ENCODE measurements at regions of chr6 and their contacts with region 1.

Region 1: DNA sequence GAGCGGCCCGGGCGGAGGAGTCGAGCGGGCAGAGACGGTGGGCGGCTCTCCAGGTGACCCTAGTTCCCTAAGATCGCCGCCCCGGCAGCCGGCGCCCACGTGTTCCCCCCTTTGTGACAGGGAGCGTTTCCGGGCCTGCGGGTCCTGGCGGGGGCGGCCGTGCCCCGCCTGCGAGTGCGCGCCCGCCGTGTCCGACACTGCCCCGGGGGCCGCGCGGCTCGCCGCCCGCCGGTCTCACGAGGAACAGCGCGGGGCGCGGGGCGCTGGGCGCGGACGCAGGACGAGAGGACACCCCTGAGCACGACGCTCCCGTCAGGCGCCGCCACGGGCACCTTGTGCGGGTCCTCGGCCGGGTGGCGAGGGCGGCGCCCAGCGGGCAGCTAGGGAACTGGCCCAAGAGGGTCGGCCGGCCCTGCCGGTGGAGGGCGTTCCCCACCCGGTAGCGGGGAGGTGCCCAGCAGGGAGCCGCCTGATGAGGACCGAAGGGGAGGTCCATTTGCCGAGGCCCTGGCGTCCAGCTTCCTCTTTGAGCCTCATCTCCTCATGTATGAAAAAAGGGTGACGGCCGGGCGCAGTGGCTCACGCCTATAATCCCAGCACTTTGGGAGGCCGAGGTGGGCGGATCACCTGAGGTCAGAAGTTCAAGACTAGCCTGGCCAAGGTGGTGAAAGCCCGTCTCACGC is at the start of gene VARS1:
- DNase-seq: peak; percentile 72 to 94
- H3K4me3 ChIP-seq: peak within 1 kb of the TSS; percentile 81 to 83
- H3K27ac ChIP-seq: peak within 1 kb of the TSS; percentile 88 to 92
- H3K4me1 ChIP-seq: peaks cover 4 to 18% of the 10 kb centered on the region in 2 donors
- H3K27me3 ChIP-seq: no peaks in the 10 kb centered on the region
- CTCF ChIP-seq: peak; percentile 71 to 97 (median 89)
- total RNA-seq, gene VARS1: 48.3 TPM

Region 2: GRCh38 chr6:31580807-31581433 is 214.8 kb before region 1 on chr6:
- intact Hi-C with region 1: no loop called
- DNase-seq: peak in 1 of 2 donors; percentile 93
- H3K4me3 ChIP-seq: peak overlapping the region; percentile 69 to 86
- H3K27ac ChIP-seq: peak overlapping the region; percentile 58 to 75
- H3K4me1 ChIP-seq: peaks cover 0 to 12% of the 10 kb centered on the region in 2 donors
- H3K27me3 ChIP-seq: no peaks in the 10 kb centered on the region
- CTCF ChIP-seq: peak; percentile 96 to 99 (median 96)

Region 3: GRCh38 chr6:31815025-31815838 is 19.5 kb after region 1 on chr6 and contains the starts of genes HSPA1A and HSPA1L:
- intact Hi-C with region 1: loop called (anchors 2 kb)
- DNase-seq: peak; percentile 90 to 98
- H3K4me3 ChIP-seq: peak within 1 kb of the TSS; percentile 50 to 72
- H3K27ac ChIP-seq: peak within 1 kb of the TSS; percentile 96
- H3K4me1 ChIP-seq: peaks cover 7 to 24% of the 10 kb centered on the region in 2 donors
- H3K27me3 ChIP-seq: no peaks in the 10 kb centered on the region
- CTCF ChIP-seq: no peak
- total RNA-seq, gene HSPA1A: 288 TPM
- total RNA-seq, gene HSPA1L: not detected

Region 4: DNA sequence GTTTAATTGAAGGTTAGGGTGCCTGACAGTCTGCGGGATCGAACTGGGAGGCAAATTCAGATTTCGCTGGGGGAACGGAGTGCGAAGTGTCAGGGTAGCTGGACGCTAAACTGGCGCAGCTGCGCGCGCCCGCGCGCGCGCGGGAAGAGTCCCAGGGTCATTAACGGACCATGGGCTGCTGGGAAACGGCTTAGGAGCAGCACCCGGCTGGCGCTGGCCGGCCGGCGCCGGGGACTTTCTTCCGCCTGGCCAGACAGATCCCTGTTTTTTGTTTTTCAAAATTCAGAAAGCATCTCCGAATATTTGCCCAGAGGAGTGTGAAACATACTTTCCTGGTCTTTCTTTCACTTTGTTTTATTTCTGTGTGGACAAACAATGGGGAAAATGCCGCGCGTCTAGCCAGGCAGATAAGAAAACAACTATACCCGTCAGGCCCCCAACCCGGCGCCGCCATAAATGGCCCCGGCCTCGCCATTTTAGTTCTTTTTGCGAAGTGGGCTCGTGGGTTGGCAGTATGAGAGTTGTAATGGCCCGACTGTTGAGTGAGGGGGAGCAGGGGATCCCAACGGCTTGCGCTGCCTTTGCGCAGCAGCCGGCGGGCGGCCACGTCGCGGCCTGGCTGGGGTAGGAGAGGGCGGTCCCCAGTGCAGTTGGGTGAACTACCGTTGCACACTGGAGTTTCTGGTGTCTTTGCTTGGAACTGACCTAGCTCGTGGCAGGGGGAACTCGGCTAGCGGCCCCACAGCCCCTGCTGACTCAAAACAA is 38.9 kb after region 1 on chr6:
- intact Hi-C with region 1: no loop called
- DNase-seq: peak in 1 of 2 donors; percentile 91
- H3K4me3 ChIP-seq: peak overlapping the region; percentile 67 to 80
- H3K27ac ChIP-seq: peak overlapping the region; percentile 84 to 90
- H3K4me1 ChIP-seq: peaks cover 21 to 43% of the 10 kb centered on the region in 2 donors
- H3K27me3 ChIP-seq: no peaks in the 10 kb centered on the region
- CTCF ChIP-seq: no peak

Region 5: GRCh38 chr6:31945507-31946369 is 150.0 kb after region 1 on chr6 and contains the start of gene CFB:
- intact Hi-C with region 1: no loop called
- DNase-seq: peak; percentile 75 to 94
- H3K4me3 ChIP-seq: peak within 1 kb of the TSS; percentile 28 to 59
- H3K27ac ChIP-seq: peak within 1 kb of the TSS; percentile 91 to 93
- H3K4me1 ChIP-seq: peaks cover 3 to 16% of the 10 kb centered on the region in 2 donors
- H3K27me3 ChIP-seq: no peaks in the 10 kb centered on the region
- CTCF ChIP-seq: no peak
- total RNA-seq, gene CFB: 132 TPM